ENCODE measurements at regions of chr2 and their contacts with region 1.

Region 1: DNA sequence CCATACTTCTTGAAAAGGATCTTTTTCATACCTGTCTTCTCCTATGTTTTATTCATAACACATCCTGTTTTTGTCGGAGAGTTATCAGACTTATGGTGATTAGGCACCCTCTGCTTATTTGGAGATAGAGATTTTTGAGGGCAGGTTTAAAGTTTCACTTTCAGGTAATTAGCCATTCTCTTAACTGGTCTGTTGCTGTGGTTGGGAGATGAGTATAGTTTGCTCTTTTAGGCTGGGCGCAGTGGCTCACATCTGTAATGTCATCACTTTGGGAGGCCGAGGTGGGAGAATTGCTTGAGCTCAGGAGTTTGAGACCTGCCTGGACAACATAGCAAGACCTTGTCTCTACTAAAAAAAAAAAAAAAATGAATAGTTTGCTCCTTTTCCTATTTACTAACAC is 25.3 kb downstream of the SFTPB start:
- DNase-seq: no peak
- ATAC-seq: no peak
- H3K4me3 Mint-ChIP-seq: no peak overlapping the region
- H3K27ac Mint-ChIP-seq: peak overlapping the region; percentile 66
- H3K4me1 Mint-ChIP-seq: peaks cover 23% of the 10 kb centered on the region
- H3K27me3 Mint-ChIP-seq: no peaks in the 10 kb centered on the region

Region 2: DNA sequence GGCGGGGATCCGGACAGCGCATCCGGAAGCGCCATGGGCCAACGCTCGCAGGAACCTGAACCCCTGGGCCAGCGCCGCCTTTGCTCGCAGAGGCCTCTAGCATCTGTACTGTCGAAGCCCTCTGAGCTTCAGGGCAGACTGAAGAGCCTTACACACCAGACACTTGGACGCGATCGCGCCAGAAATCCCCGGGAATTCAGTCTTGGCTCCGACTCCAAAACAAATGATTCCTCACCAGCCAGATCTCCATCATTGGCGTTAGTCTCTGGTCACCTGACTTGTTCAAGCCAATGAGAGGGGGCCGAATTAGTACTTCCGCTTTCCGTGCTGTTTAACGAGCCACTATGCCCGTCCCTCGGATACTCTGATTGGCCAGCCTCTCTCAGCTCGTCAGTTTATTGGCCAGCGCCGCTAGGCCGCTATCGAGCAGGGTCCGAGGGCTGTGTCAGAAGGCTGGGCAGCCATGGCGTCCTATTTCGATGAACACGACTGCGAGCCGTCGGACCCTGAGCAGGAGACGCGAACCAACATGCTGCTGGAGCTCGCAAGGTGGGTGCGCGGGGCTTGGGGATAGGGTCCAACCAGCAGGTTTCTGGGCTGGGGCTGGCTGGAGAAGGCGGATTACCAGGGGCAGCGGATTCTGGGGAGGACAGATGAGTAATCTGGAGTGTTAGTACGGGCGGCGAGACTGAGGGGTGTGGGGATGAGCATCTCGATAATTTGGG is 47.3 kb before region 1 on chr2 and contains the start of gene RNF181:
- CTCF ChIA-PET with region 1: interaction called, 12 read pairs
- POLR2A ChIA-PET with region 1: no interaction called
- DNase-seq: peak; percentile 96
- ATAC-seq: peak; percentile 100
- H3K4me3 Mint-ChIP-seq: peak within 1 kb of the TSS; percentile 100
- H3K27ac Mint-ChIP-seq: peak within 1 kb of the TSS; percentile 97
- H3K4me1 Mint-ChIP-seq: peaks cover 37% of the 10 kb centered on the region
- H3K27me3 Mint-ChIP-seq: no peaks in the 10 kb centered on the region
- total RNA-seq, gene RNF181: 91.0 to 104 TPM

Region 3: DNA sequence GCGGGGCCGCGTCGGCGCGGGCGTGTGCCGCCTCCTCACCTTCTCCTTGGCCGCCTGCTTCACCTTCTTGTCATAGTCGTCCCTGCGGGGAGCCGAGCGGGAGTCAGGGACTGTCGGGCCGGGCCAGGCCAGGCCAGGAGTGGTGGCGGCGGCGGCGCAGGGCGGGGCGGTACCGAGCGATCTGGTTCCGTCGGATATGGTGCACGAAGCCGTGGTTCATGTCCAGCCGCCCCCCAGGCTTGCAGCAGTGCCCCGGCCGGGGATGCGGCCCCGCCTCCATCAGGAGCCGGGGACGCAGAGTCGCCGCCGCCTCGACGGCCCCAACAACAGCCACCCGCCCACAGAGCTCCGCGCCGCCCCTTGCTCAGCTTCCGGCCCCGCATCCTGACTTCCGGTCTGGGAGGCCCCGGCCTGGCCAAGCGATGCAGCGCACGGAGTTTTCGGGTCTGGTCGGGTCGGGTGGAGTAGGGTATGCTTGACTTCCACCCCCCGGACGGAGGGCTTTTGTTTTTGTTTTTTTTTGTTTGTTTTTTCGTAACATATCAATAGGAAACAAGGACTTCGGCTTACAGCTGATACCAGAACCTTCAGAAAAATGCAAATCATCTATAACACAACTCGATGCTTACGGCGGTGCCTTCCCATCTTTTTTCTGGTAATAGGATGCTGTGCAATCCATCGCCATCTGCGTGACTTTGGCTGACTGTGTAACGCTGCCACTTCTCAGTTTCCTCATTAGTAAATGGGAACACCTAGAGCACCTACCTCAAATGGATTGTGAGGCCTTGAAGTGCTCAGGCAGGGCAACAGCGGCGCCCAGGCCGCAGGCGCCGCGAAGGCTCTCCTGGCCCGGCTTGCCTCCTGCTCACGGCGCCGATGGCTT is 30.8 kb before region 1 on chr2 and contains the start of gene C2orf68:
- CTCF ChIA-PET with region 1: interaction called, 22 read pairs
- POLR2A ChIA-PET with region 1: interaction called, 6 read pairs
- DNase-seq: peak; percentile 91
- ATAC-seq: peak; percentile 74
- H3K4me3 Mint-ChIP-seq: peak within 1 kb of the TSS; percentile 97
- H3K27ac Mint-ChIP-seq: peak within 1 kb of the TSS; percentile 94
- H3K4me1 Mint-ChIP-seq: peaks cover 35% of the 10 kb centered on the region
- H3K27me3 Mint-ChIP-seq: no peaks in the 10 kb centered on the region
- total RNA-seq, gene C2orf68: 38.9 to 43.4 TPM

Region 4: GRCh38 chr2:85707304-85707703 is 64.6 kb after region 1 on chr2:
- CTCF ChIA-PET with region 1: interaction called, 70 read pairs
- POLR2A ChIA-PET with region 1: no interaction called
- DNase-seq: peak; percentile 87
- ATAC-seq: peak; percentile 88
- H3K4me3 Mint-ChIP-seq: no peak overlapping the region
- H3K27ac Mint-ChIP-seq: no peak overlapping the region
- H3K4me1 Mint-ChIP-seq: peaks cover 61% of the 10 kb centered on the region
- H3K27me3 Mint-ChIP-seq: peaks cover 10% of the 10 kb centered on the region

Region 5: DNA sequence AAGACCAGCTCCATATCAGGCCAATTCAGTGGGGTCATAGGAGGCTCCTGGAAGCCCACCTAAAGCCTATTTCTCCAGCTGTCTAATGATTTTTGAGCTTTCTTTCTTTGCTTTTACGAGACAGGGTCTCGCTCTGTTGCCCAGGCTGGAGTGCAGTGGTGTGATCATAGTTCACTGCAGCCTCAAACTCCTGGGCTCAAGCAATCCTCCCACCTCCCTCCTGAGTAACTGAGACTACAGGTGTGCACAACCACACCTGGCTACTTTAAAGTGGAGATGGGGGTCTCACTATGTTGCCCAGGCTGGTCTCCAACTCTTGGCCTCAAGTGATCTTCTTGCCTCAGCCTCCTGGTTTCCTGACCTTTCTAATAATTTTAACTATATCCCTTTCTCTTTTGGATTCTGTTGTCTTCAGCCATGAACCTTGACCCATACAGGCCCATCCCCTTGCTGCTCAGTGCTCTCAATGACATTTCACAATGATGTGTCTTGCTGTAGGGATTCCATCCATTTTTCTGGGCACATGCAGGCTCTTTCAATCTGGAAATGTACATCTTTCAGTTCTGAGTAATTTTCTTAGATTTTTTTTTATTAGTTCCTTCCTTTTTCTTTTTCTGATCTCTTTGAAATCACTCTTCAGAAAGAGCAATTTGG is 81.1 kb after region 1 on chr2:
- CTCF ChIA-PET with region 1: interaction called, 18 read pairs
- POLR2A ChIA-PET with region 1: interaction called, 5 read pairs
- DNase-seq: no peak
- ATAC-seq: no peak
- H3K4me3 Mint-ChIP-seq: no peak overlapping the region
- H3K27ac Mint-ChIP-seq: no peak overlapping the region
- H3K4me1 Mint-ChIP-seq: no peaks in the 10 kb centered on the region
- H3K27me3 Mint-ChIP-seq: peaks cover 19% of the 10 kb centered on the region

Region 6: DNA sequence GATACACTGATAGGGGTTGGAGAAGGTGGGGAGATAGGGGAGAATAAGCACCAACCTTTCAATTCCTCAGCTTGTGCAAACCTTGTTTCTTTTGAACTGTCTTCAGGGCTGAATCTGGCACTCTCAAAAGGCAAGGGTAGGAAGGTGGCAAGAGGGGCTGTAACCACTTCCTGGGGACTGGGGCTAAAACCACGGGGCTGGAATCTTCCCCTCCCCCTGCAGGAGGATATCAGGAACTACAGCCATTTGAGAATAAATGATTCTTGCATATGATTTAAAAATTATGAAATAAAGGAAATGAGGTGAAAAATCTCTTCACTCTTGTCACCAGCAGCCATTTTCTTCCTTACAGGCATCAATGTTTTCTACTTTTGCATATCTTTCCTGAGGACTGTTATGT is 161.9 kb after region 1 on chr2:
- CTCF ChIA-PET with region 1: interaction called, 10 read pairs
- POLR2A ChIA-PET with region 1: no interaction called
- DNase-seq: peak; percentile 59
- ATAC-seq: peak; percentile 58
- H3K4me3 Mint-ChIP-seq: no peak overlapping the region
- H3K27ac Mint-ChIP-seq: no peak overlapping the region
- H3K4me1 Mint-ChIP-seq: peaks cover 18% of the 10 kb centered on the region
- H3K27me3 Mint-ChIP-seq: peaks cover 15% of the 10 kb centered on the region

Region 7: DNA sequence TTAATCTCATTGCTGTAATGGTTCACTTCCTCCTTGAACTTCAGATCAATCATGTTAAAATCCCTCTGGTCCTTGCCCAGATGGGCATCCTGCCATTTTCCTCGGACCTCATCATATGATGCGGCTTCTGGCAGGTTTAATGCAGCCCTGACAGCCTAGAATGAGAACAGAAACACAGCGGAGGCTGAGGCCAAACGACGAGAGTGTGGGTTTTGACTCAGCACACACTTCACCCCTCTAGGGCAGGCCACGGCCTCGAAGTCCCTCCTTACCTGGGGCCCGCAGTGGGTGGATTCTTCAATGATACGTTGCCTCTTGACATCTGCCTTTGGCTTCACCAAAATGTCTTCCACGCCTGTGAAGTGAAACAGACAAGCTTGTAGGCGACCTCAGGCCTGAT is 406.2 kb after region 1 on chr2:
- CTCF ChIA-PET with region 1: no interaction called
- POLR2A ChIA-PET with region 1: no interaction called
- DNase-seq: no peak
- ATAC-seq: no peak
- H3K4me3 Mint-ChIP-seq: no peak overlapping the region
- H3K27ac Mint-ChIP-seq: no peak overlapping the region
- H3K4me1 Mint-ChIP-seq: no peaks in the 10 kb centered on the region
- H3K27me3 Mint-ChIP-seq: no peaks in the 10 kb centered on the region